PC-3 (cell line): ENCODE measurements at regions of chr19 and their contacts with region 1.

Region 1: DNA sequence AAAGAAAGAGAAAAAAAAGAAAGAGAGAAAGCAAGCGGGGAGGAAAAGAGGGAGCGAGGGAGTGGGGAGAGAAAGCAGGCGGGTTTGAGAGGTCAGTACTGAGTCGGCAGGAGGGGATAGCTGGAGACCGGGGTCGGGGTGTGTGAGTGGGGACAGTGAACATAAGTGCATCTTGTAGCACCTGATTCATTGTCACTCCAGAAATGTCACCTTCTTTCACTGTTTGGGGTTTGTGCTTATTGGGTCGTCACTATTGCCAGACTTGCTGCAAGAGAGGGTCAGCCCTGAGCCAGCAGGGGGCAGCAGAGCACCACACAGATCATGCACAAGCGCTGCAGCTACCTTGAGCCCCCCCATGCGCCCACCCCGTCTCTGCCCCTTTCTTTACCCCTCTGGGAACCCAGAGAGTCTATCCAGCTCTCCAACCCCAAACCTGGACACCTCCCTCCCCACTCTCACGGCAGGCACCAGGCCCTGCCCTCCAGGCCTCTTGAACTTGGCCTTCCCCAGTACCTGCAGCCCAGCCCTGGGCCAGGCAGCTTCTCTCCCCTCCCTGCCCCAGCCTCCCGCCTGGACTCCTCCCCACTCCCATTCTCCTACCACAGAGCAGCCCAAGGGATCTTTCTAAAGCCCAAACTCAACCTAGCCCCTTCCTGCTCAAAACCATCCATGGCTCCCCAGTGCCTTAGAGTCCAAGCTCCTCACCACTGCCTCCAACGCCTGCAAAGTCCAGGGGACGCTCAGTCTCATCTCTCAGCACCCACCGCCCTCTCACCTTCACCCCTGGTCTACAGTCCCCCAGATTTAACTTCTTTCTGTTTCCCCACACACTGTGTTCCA is 9.7 kb upstream of the CEACAM16 start:
- DNase-seq: peak; percentile 64
- ATAC-seq: peak; percentile 48
- H3K4me3 ChIP-seq: no peak overlapping the region
- H3K27ac ChIP-seq: no peak overlapping the region
- H3K4me1 ChIP-seq: peaks cover 38% of the 10 kb centered on the region
- H3K27me3 ChIP-seq: no peaks in the 10 kb centered on the region
- CTCF ChIP-seq: peak; percentile 79

Region 2: GRCh38 chr19:44608391-44608821 is 80.9 kb before region 1 on chr19:
- CTCF ChIA-PET with region 1: no interaction called
- POLR2A ChIA-PET with region 1: no interaction called
- intact Hi-C with region 1: no loop called
- DNase-seq: peak; percentile 54
- ATAC-seq: no peak; the same call in 1 of the 2 replicates
- H3K4me3 ChIP-seq: no peak overlapping the region
- H3K27ac ChIP-seq: no peak overlapping the region
- H3K4me1 ChIP-seq: peaks cover 26% of the 10 kb centered on the region
- H3K27me3 ChIP-seq: no peaks in the 10 kb centered on the region
- CTCF ChIP-seq: no peak

Region 3: GRCh38 chr19:44702551-44703176 is 13.4 kb after region 1 on chr19:
- CTCF ChIA-PET with region 1: no interaction called
- POLR2A ChIA-PET with region 1: no interaction called
- intact Hi-C with region 1: no loop called
- DNase-seq: no peak
- ATAC-seq: no peak
- H3K4me3 ChIP-seq: no peak overlapping the region
- H3K27ac ChIP-seq: no peak overlapping the region
- H3K4me1 ChIP-seq: no peaks in the 10 kb centered on the region
- H3K27me3 ChIP-seq: no peaks in the 10 kb centered on the region
- CTCF ChIP-seq: no peak

Region 4: GRCh38 chr19:44718441-44719261 is 29.4 kb after region 1 on chr19:
- CTCF ChIA-PET with region 1: interaction called, 7 read pairs
- POLR2A ChIA-PET with region 1: no interaction called
- intact Hi-C with region 1: loop called (anchors 2 kb)
- DNase-seq: peak; percentile 61
- ATAC-seq: peak; percentile 64
- H3K4me3 ChIP-seq: no peak overlapping the region
- H3K27ac ChIP-seq: 0 out of 2 replicates have a peak overlapping the region, but pooled peaks have one; percentile 7
- H3K4me1 ChIP-seq: peaks cover 19% of the 10 kb centered on the region
- H3K27me3 ChIP-seq: no peaks in the 10 kb centered on the region
- CTCF ChIP-seq: no peak

Region 5: DNA sequence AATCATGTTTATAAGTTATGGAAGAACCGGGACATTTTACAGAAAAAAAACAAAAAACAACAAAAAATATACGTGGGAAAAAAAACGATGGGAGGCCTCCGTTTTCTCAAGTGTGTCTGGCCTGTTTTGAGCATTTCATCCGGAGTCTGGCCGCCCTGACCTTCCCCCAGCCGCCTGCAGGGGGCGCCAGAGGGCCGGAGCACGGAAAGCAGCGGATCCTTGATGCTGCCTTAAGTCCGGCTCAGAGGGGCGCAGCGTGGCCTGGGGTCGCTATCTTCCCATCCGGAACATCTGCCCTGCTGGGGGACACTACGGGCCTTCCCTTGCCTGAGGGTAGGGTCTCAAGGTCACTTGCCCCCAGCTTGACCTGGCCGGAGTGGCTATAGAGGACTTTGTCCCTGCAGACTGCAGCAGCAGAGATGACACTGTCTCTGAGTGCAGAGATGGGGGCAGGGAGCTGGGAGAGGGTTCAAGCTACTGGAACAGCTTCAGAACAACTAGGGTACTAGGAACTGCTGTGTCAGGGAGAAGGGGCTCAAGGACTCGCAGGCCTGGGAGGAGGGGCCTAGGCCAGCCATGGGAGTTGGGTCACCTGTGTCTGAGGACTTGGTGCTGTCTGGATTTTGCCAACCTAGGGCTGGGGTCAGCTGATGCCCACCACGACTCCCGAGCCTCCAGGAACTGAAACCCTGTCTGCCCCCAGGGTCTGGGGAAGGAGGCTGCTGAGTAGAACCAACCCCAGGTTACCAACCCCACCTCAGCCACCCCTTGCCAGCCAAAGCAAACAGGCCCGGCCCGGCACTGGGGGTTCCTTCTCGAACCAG is 214.5 kb after region 1 on chr19:
- CTCF ChIA-PET with region 1: no interaction called
- POLR2A ChIA-PET with region 1: no interaction called
- intact Hi-C with region 1: no loop called
- DNase-seq: peak; percentile 50
- ATAC-seq: peak; percentile 57
- H3K4me3 ChIP-seq: no peak overlapping the region
- H3K27ac ChIP-seq: no peak overlapping the region
- H3K4me1 ChIP-seq: no peaks in the 10 kb centered on the region
- H3K27me3 ChIP-seq: no peaks in the 10 kb centered on the region
- CTCF ChIP-seq: peak; percentile 86